ENCODE measurements at regions of chr5 and their contacts with region 1.

Region 1: GRCh38 chr5:31860726-31861433 is 221.9 kb downstream of the PDZD2 start:
- DNase-seq: no peak
- ATAC-seq: no peak
- H3K4me3 ChIP-seq: no peak overlapping the region
- H3K27ac ChIP-seq: no peak overlapping the region
- H3K4me1 ChIP-seq: no peaks in the 10 kb centered on the region
- H3K27me3 ChIP-seq: peaks cover 2% of the 10 kb centered on the region; the same call in 1 of the 2 replicates
- CTCF ChIP-seq: no peak

Region 2: GRCh38 chr5:31656806-31657205 is 204.1 kb before region 1 on chr5:
- CTCF ChIA-PET with region 1: no interaction called
- POLR2A ChIA-PET with region 1: no interaction called
- in situ Hi-C with region 1: no loop called
- intact Hi-C with region 1: no loop called
- DNase-seq: no peak
- ATAC-seq: no peak
- H3K4me3 ChIP-seq: no peak overlapping the region
- H3K27ac ChIP-seq: no peak overlapping the region
- H3K4me1 ChIP-seq: no peaks in the 10 kb centered on the region
- H3K27me3 ChIP-seq: peaks cover 40% of the 10 kb centered on the region
- CTCF ChIP-seq: no peak

Region 3: DNA sequence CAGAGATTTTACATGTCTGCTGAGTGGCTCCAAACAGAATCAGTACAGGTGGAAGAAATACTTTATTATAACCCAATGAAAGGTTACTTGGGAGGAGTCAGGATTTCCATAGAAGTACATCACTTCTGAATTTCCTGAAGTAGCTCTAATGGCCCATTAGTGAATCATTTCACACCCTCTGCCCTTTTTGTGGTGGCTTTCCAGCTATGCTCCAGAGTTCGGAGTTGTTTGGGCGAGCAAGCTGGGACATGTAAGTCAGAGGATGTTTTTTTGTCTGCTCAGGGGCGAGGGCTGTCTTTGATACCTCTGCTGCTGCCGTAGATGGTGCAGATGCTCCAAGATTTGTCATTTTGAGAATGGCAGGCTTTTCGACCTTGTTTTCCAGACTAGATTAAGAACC is 87.1 kb after region 1 on chr5:
- CTCF ChIA-PET with region 1: no interaction called
- POLR2A ChIA-PET with region 1: no interaction called
- in situ Hi-C with region 1: no loop called
- intact Hi-C with region 1: no loop called
- DNase-seq: no peak
- ATAC-seq: no peak
- H3K4me3 ChIP-seq: no peak overlapping the region
- H3K27ac ChIP-seq: no peak overlapping the region
- H3K4me1 ChIP-seq: no peaks in the 10 kb centered on the region
- H3K27me3 ChIP-seq: peaks cover 3% of the 10 kb centered on the region; the same call in 1 of the 2 replicates
- CTCF ChIP-seq: no peak

Region 4: GRCh38 chr5:32584646-32585045 is 723.8 kb after region 1 on chr5:
- CTCF ChIA-PET with region 1: no interaction called
- POLR2A ChIA-PET with region 1: interaction called, 13 read pairs
- in situ Hi-C with region 1: no loop called
- intact Hi-C with region 1: no loop called
- DNase-seq: peak; percentile 48
- ATAC-seq: no peak
- H3K4me3 ChIP-seq: peak overlapping the region; percentile 83 to 91
- H3K27ac ChIP-seq: peak overlapping the region; percentile 83
- H3K4me1 ChIP-seq: peaks cover 8% of the 10 kb centered on the region
- H3K27me3 ChIP-seq: no peaks in the 10 kb centered on the region
- CTCF ChIP-seq: no peak

Region 5: GRCh38 chr5:32690153-32690552 is 829.3 kb after region 1 on chr5:
- CTCF ChIA-PET with region 1: no interaction called
- POLR2A ChIA-PET with region 1: no interaction called
- in situ Hi-C with region 1: no loop called
- intact Hi-C with region 1: no loop called
- DNase-seq: no peak
- ATAC-seq: no peak
- H3K4me3 ChIP-seq: no peak overlapping the region
- H3K27ac ChIP-seq: no peak overlapping the region
- H3K4me1 ChIP-seq: no peaks in the 10 kb centered on the region
- H3K27me3 ChIP-seq: no peaks in the 10 kb centered on the region
- CTCF ChIP-seq: peak; percentile 51

Measured in Panc1 (cell line).